ENCODE measurements at regions of chr4 and their contacts with region 1.

Region 1: DNA sequence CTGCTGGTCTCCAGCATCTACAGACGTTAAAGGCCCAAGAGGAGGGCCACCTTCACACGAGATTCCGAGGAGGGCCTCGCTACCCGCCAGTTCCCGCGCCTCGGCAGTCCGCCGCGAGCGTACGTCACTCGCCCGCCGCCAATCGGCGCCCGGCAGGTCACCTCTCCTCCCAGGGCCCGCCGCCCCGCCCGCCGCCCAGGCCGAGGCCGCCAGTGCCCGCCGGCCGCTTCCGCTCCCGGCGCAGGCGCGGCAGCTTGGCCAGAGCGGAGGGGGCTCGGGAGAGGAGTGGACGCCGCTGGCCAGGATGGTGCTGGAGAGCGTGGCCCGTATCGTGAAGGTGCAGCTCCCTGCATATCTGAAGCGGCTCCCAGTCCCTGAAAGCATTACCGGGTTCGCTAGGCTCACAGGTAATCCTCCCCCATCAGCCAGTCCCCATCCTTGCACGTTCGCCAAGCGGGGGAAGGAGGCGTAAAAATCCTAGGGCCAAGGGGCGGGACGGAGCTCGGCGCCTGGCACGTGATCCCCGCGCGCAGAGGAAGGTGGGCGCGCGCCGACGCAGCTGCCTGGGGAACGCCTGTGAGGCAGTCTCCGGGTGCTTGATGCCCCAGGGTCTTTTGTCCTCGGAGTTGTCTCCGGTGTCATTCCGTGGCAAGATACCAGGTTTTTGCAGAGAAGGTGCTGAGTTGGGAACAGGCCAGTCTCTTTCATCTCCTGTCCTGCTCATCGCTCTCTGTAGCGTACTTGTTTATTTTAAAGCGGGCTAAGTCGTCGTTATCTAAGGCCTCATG is at the start of gene CISD2:
- DNase-seq: peak; percentile 91 to 95 (median 93)
- H3K4me3 ChIP-seq: peak within 1 kb of the TSS; percentile 63
- H3K27ac ChIP-seq: peak within 1 kb of the TSS; percentile 89 to 93
- H3K4me1 ChIP-seq: peaks cover 2% of the 10 kb centered on the region
- H3K27me3 ChIP-seq: no peaks in the 10 kb centered on the region
- CTCF ChIP-seq: peak in 1 of 3 donors; percentile 32
- EP300 ChIP-seq: no peak
- POLR2A ChIP-seq: peak; percentile 90
- total RNA-seq, gene CISD2: 7.9 to 22.7 (median 19.1) TPM

Region 2: GRCh38 chr4:102500696-102501446 is 368.1 kb before region 1 on chr4 and contains the start of gene NFKB1:
- intact Hi-C with region 1: loop called in 1 of 4 experiments (anchors 2 kb)
- DNase-seq: peak; percentile 68 to 81 (median 73)
- H3K4me3 ChIP-seq: peak within 1 kb of the TSS; percentile 68
- H3K27ac ChIP-seq: peak within 1 kb of the TSS; percentile 99 to 100
- H3K4me1 ChIP-seq: peaks cover 4% of the 10 kb centered on the region
- H3K27me3 ChIP-seq: no peaks in the 10 kb centered on the region
- CTCF ChIP-seq: no peak
- EP300 ChIP-seq: peak; percentile 3
- POLR2A ChIP-seq: peak; percentile 14
- total RNA-seq, gene NFKB1: 18.6 to 42.4 (median 36.6) TPM